Posterior vena cava (tissue), 2 donors: ENCODE measurements at regions of chr7 and their contacts with region 1.

Region 1: DNA sequence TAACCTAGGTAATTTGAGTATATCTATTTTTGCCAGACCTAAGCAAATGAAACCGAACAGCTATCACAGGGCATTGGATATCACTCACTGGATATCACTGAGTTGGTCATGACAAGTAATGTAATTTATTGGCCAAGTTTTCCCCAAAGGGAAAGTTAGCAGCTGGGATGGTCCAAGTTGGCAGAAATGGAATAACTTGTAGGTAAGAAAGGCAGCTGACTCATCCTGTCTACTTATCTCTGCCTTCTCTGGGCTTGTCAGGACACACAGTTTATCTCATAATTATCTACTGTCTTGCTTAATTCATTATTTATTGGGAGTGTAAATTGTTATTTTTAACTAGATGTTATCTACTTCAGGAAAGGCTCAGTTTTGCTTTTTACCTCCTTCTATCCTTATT is 502.0 kb upstream of the DPP6 start:
- DNase-seq: no peak

Region 2: DNA sequence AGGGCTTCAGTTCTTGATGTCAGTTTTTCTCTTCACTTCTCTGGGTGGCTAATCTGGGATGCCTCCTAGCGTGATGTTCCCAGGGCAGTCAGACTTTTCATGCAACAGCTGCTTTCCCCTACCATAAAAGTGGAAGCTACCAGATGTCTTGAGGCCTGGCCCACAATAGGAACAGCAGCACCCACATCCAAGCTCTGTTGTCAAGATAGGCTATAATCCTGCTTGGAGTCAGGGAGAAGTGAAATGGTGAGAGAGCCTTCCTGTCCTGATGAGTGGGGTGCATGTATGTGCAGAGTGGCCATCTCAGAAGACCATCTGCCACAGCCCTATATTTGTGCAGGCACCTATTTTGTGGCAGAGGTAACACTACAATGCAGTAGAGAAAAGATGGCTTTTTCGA is 1627.9 kb after region 1 on chr7:
- intact Hi-C with region 1: loop called in 1 of 2 experiments (anchors 5 kb)
- DNase-seq: no peak